Activated CD4-positive, alpha-beta T cell treated with anti-CD3 and anti-CD28 coated beads for 36 hours (primary cell): ENCODE measurements at regions of chr19 and their contacts with region 1.

Region 1: DNA sequence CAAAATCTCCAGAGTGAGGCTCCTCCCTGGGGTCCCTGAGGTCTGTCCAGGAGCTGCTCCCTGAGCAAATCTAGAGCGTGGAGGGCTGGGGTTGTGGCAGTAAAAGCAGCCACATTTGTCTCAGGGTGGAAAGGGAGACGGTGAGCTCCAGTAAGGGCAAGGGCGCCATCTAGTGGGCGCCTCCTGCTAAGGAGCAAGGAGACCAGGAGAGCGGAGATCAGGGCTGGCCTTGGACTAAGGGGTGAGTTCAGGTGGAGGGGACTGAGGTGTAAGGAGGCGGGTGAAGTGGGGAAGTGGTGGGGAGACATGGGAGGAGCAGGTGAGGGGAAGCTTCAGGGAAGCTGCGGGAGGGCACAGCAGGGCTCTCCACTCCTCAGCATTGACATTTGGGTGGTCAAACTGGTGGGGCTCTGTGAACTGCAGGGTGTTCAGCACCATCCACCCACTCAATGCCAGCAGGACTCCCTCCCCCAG is 5.3 kb upstream of the CEACAM21 start:
- DNase-seq: peak; percentile 92
- ATAC-seq: peak; percentile 97
- H3K4me3 Mint-ChIP-seq: no peak overlapping the region
- H3K27ac Mint-ChIP-seq: no peak overlapping the region
- H3K4me1 Mint-ChIP-seq: peaks cover 28% of the 10 kb centered on the region
- H3K27me3 Mint-ChIP-seq: no peaks in the 10 kb centered on the region

Region 2: DNA sequence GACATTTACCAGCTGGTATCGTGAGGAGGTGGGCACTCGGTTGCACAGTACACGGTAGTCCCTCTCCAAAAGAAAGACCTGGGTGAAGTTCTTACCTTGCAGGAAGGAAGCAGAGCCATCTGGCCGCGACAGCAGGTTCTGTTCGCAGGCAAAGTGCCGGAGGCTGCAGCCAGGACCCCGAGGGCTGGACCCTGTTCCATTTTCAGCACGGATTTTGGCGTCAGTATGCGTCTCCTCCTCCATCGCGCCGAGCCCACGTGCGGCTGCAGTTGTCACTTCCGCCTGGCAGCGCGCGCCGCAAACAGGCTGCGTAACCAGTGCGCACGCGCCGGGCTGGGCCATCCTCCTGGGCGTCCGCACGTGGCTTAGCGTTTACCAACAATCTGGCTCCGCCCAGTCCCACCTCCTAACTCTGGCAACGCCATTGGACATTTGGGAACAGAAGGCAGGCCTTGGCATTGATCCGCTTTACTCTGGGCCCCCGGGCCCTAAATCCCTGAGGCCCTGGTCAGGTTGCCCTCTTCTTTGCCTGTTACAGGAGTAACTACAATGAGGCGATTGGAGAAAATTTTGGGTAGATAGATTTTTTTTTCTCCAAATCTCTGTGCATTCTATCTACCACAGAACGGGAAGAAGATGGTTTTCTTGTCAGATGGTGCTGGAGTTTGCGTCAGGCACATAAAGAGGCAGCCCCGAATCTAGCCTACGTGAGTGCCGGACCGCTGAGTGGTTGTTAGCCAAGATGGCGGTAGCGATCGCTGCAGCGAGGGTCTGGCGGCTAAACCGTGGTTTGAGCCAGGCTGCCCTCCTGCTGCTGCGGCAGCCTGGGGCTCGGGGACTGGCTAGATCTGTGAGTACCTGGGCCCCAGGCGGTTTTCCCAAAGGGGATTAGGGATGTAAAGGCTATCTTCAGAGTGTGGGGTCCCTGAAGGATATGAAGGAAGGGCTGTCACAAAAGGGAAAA is 173.3 kb before region 1 on chr19 and contains the starts of genes BCKDHA and EXOSC5:
- CTCF ChIA-PET with region 1: no interaction called
- POLR2A ChIA-PET with region 1: no interaction called
- intact Hi-C with region 1: no loop called
- DNase-seq: peak; percentile 99
- ATAC-seq: peak; percentile 100
- H3K4me3 Mint-ChIP-seq: peak within 1 kb of the TSS; percentile 97
- H3K27ac Mint-ChIP-seq: peak within 1 kb of the TSS; percentile 97
- H3K4me1 Mint-ChIP-seq: peaks cover 31% of the 10 kb centered on the region
- H3K27me3 Mint-ChIP-seq: no peaks in the 10 kb centered on the region
- total RNA-seq, gene BCKDHA: 14.5 to 25.4 TPM
- total RNA-seq, gene EXOSC5: 32.7 to 47.8 TPM

Region 3: GRCh38 chr19:41449079-41449864 is 121.4 kb before region 1 on chr19:
- CTCF ChIA-PET with region 1: interaction called, 120 read pairs
- POLR2A ChIA-PET with region 1: no interaction called
- intact Hi-C with region 1: loop called (anchors 1 kb)
- DNase-seq: peak; percentile 85
- ATAC-seq: peak; percentile 93
- H3K4me3 Mint-ChIP-seq: peak overlapping the region; percentile 70
- H3K27ac Mint-ChIP-seq: no peak overlapping the region
- H3K4me1 Mint-ChIP-seq: peaks cover 11% of the 10 kb centered on the region
- H3K27me3 Mint-ChIP-seq: peaks cover 12% of the 10 kb centered on the region

Region 4: GRCh38 chr19:41521931-41522555 is 48.6 kb before region 1 on chr19:
- CTCF ChIA-PET with region 1: interaction called, 6 read pairs
- POLR2A ChIA-PET with region 1: interaction called, 3 read pairs
- intact Hi-C with region 1: loop called in 1 of 2 experiments (anchors 1 kb)
- DNase-seq: peak; percentile 64
- ATAC-seq: peak; percentile 51
- H3K4me3 Mint-ChIP-seq: peak overlapping the region; percentile 66
- H3K27ac Mint-ChIP-seq: peak overlapping the region; percentile 89
- H3K4me1 Mint-ChIP-seq: peaks cover 20% of the 10 kb centered on the region
- H3K27me3 Mint-ChIP-seq: peaks cover 14% of the 10 kb centered on the region

Region 5: DNA sequence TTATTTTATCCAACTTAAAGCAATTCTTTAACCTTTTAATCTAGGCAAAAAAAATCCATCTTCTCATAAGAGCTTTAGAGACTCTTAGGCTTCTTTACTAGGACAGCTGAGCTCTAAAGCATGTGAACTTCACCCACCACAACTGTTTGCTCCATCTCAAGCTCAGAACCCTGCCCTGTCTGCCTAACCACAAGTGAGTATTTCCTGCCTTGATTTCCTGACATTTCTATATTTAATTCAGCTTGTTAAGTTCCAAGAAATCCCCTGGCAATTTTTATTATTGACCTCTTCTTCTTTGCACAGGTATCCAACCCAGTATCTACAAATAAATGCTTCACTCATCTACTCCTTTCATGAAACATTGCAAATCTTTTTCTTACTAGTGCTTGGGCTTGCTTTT is 15.8 kb before region 1 on chr19:
- CTCF ChIA-PET with region 1: interaction called, 450 read pairs
- POLR2A ChIA-PET with region 1: no interaction called
- intact Hi-C with region 1: no loop called
- DNase-seq: peak; percentile 43
- ATAC-seq: peak; percentile 37
- H3K4me3 Mint-ChIP-seq: peak overlapping the region; percentile 42
- H3K27ac Mint-ChIP-seq: peak overlapping the region; percentile 94
- H3K4me1 Mint-ChIP-seq: peaks cover 74% of the 10 kb centered on the region
- H3K27me3 Mint-ChIP-seq: no peaks in the 10 kb centered on the region

Region 6: DNA sequence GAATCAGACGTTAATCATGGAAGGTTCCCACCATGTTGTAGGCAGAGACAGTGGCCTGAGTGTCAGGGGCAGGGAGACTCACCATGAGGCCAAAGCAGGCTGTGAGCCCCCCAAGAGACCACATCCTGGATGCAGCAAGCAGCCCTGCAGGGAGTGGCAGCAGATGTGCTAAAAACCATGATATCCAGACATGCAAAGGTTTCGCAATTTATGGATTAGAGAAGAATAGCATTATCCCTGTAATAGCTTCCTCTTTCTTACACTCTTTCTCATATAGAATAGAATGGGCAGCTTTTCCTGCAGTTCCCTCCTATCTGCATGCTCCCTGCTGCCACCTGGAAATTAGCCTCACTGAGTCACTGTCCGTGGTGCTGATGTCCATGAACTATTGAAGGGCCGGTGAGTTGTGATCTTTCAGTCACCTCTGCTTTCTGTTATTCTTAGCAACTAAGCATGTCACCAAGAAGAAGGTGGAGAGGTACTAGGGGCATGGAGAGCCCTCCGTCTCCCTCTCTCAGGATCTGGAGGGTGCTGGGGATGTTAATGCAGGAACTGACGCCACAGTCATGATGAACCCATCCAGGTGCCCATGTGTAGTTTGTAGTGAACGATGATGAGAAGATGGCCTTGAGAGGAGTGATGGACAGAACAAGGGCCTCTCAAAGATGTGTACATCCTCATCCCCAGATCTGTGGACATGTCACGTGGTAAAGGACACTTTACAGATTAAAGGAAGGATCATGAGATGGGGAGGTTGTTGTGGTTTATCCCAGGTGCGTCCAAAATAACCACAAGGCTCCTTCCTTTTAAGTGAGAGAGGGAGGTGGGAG is 46.3 kb after region 1 on chr19:
- CTCF ChIA-PET with region 1: no interaction called
- POLR2A ChIA-PET with region 1: no interaction called
- intact Hi-C with region 1: no loop called
- DNase-seq: peak; percentile 22
- ATAC-seq: no peak
- H3K4me3 Mint-ChIP-seq: no peak overlapping the region
- H3K27ac Mint-ChIP-seq: no peak overlapping the region
- H3K4me1 Mint-ChIP-seq: no peaks in the 10 kb centered on the region
- H3K27me3 Mint-ChIP-seq: peaks cover 4% of the 10 kb centered on the region

Region 7: DNA sequence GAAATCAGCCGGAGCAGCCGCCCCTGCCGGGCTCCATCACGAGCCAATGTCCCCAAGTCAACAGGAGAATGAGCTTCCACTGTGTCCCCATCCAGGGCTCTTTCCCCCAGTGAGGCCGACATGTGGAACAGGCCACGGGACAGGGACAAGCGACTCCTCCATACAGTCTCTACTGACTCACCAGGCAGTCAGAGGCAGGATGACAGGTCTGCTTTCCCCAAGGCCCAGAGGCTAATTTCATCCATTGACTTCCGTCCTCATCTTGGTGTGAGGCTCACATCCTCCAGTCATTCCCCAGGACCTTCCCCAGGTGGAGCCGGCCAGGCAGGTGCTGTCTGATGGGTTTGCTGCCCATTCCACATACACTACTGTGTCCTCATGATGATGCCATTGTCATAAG is 188.2 kb after region 1 on chr19:
- CTCF ChIA-PET with region 1: no interaction called
- POLR2A ChIA-PET with region 1: no interaction called
- intact Hi-C with region 1: no loop called
- DNase-seq: no peak
- ATAC-seq: no peak
- H3K4me3 Mint-ChIP-seq: no peak overlapping the region
- H3K27ac Mint-ChIP-seq: no peak overlapping the region
- H3K4me1 Mint-ChIP-seq: peaks cover 3% of the 10 kb centered on the region
- H3K27me3 Mint-ChIP-seq: peaks cover 46% of the 10 kb centered on the region